Activated T-helper 2 cell treated with anti-CD3 and anti-CD28 coated beads, Interferon-gamma antibody, Interleukin-2, Interleukin-4, amounts not matched to agents 10 μg/mL and 5 μg/mL and 100 μg/mL, durations not matched to agents 14 hours and 24 hours and 36 hours (primary cell): ENCODE measurements at regions of chr9 and their contacts with region 1.

Region 1: DNA sequence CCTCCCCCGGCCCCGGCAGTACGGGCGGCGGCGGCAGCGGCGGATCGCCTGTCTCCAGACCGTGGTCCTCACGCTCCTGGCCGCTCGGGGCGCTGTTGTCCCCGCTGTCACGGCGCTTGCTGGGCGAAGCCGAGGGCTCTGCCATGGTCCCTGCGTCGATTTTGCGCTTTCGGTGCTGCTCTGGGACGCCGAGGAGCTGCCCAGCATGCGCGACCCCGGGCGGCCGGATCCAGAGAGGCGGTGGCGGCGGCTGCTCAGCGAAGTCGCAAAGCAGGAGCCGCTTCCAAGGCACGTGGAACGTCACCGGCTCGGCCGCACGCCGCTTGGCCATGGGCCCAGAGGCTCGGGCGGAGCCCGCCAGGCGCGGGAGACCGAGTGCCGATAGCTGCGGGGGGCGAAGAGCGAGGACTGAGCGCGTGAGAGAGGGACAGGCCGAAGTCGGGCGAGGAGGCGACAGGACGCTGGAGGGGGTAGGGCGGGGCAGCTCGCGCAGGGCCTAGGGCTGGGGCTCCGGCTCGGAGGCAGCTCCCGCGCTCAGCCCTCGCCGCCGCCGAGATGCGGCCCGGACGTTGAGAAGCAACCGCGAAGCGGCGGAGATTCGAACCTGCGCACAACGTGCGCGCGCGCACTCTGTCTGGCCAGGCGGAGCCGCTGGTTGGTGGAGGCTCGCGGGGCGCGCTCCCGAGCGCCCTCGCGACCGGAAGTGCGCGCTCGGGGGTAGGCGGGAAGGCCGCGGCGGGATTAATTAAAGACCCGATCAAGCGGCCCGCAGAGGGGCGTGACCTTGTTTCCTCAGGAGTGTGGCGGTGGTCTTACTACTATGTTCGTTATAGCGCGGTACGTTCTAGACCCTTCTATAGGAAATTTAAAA is at the start of gene C9orf40:
- DNase-seq: peak; percentile 88
- H3K4me3 Mint-ChIP-seq: peak within 1 kb of the TSS; percentile 93
- H3K27ac Mint-ChIP-seq: peak within 1 kb of the TSS; percentile 89
- H3K4me1 Mint-ChIP-seq: peaks cover 24% of the 10 kb centered on the region
- H3K27me3 Mint-ChIP-seq: no peaks in the 10 kb centered on the region
- total RNA-seq, gene C9orf40: 19.2 and 19.6 TPM in 2 replicates

Region 2: GRCh38 chr9:74556685-74557084 is 395.8 kb before region 1 on chr9:
- intact Hi-C with region 1: loop called (anchors 2 kb)
- DNase-seq: no peak
- H3K4me3 Mint-ChIP-seq: no peak overlapping the region
- H3K27ac Mint-ChIP-seq: no peak overlapping the region
- H3K4me1 Mint-ChIP-seq: peaks cover 9% of the 10 kb centered on the region
- H3K27me3 Mint-ChIP-seq: peaks cover 23% of the 10 kb centered on the region

Region 3: DNA sequence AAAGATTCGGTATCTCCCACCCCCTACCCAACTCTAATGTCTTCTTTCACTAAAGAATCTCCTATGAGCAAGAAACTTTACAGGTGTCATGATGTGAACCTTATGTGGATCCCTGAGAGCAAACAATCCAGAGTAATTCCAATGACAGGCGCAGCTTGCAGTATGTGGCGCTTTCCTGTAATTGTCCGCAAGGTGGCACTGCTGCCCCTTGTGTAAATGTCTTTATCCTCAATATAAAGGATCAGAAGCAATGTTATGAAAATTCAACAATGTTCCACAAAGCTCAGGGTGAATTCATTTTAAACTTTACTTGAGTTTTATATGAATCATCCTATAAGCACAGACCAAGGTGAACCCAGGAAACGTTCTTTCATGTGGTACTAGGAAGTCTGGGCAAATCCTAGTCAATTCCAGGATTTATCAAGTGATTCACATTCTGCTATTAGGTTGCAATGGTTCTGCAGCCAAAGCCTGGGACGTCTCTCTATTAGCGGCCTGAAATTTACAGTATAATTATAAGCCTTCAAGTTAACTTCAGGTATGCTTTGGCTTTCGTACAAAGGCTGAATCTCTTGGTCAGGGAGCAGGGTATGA is 178.5 kb before region 1 on chr9:
- intact Hi-C with region 1: loop called (anchors 2 kb)
- DNase-seq: peak; percentile 55
- H3K4me3 Mint-ChIP-seq: no peak overlapping the region
- H3K27ac Mint-ChIP-seq: no peak overlapping the region
- H3K4me1 Mint-ChIP-seq: peaks cover 16% of the 10 kb centered on the region
- H3K27me3 Mint-ChIP-seq: peaks cover 6% of the 10 kb centered on the region

Region 4: DNA sequence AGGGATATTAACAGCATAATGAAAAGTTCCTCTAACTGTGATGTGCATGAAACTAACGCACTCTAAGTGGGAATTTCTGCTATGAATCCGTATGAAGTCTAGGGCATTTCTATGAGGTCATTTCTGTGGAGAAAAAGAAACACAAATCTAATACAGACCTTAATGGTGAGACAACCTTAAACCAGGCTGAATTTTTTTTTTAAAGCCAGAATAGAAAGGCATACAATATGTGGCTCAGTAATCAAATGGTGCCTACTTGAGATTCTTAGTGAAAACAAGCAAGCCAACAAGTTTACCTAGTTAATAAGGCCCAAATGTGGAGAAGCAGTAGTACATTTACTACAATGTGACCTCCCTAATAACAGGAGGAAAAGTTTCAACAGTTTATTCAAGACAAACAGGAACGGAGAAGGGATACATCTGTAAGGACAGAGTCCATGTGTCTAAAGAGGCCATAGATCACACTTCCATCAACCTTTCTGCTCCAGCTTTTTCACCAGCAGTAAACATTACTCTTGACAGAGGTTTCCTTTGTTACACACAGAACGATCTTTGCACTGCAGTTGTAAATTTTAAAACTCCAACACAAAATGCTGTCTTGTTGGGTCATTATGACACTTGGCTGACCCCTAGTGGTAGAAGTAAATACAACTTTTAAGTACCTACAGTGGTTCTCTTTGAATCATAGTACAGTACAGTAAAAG is 49.4 kb after region 1 on chr9:
- intact Hi-C with region 1: loop called (anchors 2 kb)
- DNase-seq: no peak
- H3K4me3 Mint-ChIP-seq: no peak overlapping the region
- H3K27ac Mint-ChIP-seq: no peak overlapping the region
- H3K4me1 Mint-ChIP-seq: peaks cover 4% of the 10 kb centered on the region
- H3K27me3 Mint-ChIP-seq: no peaks in the 10 kb centered on the region

Region 5: DNA sequence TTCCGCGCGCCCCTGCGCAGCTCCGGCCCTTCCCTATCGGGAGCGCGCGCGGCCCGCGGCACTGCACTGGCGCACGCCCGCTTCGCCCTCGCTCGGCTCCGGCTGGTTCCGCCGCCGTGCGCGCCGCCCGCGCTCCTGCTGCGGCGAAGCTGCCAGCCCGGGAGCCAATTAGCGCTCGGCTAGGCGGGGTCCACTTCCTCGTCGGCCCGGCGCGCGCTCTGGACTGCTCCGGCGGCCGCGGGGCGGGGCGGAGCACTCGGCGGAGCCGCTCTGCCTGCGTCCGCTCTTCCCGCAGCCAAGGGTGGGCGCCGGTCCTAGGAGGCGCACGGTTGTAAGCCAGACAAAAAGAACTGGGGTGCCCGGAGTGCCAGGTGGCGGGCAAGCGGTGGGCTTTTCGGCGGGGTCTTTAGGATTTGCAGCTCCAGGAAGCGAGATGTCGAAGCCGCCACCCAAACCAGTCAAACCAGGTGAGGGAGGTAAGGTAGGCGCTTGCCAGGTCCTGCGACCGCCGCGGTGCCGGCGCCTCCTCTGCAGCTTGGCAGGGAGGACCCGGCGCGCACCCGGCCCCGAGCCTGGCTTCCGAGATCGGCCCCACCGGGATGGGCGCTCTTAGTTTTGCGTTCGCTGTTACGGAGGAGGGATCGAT is 135.9 kb after region 1 on chr9 and contains the start of gene OSTF1:
- intact Hi-C with region 1: loop called (anchors 1 kb)
- DNase-seq: peak; percentile 93
- H3K4me3 Mint-ChIP-seq: peak within 1 kb of the TSS; percentile 97
- H3K27ac Mint-ChIP-seq: peak within 1 kb of the TSS; percentile 94
- H3K4me1 Mint-ChIP-seq: peaks cover 62% of the 10 kb centered on the region
- H3K27me3 Mint-ChIP-seq: no peaks in the 10 kb centered on the region
- total RNA-seq, gene OSTF1: 86.8 and 87.5 TPM in 2 replicates

Region 6: DNA sequence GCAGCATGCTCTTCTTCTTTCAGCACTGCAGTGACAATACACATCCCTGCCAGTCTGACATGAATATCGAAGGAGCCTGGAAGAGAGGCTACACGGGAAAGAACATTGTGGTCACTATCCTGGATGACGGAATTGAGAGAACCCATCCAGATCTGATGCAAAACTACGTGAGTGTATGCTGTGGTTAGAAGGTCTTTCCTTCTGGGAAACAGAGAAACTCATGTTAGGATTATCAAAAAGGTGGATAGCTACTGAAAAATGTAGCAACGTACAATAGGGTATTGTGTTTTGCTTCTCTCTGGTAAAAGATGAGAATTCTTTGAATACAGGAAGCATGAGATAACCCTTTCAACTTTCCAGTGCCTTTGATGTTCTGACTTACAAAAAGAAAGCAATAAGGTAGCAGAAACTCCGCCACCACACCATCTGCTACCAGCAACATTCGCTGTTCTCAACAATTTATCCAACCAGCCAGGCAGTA is 1071.2 kb after region 1 on chr9:
- intact Hi-C with region 1: loop called (anchors 10 kb)
- DNase-seq: peak; percentile 32
- H3K4me3 Mint-ChIP-seq: peak overlapping the region; percentile 64
- H3K27ac Mint-ChIP-seq: peak overlapping the region; percentile 70
- H3K4me1 Mint-ChIP-seq: peaks cover 79% of the 10 kb centered on the region
- H3K27me3 Mint-ChIP-seq: no peaks in the 10 kb centered on the region